ENCODE measurements at regions of chr2 and their contacts with region 1.

Region 1: DNA sequence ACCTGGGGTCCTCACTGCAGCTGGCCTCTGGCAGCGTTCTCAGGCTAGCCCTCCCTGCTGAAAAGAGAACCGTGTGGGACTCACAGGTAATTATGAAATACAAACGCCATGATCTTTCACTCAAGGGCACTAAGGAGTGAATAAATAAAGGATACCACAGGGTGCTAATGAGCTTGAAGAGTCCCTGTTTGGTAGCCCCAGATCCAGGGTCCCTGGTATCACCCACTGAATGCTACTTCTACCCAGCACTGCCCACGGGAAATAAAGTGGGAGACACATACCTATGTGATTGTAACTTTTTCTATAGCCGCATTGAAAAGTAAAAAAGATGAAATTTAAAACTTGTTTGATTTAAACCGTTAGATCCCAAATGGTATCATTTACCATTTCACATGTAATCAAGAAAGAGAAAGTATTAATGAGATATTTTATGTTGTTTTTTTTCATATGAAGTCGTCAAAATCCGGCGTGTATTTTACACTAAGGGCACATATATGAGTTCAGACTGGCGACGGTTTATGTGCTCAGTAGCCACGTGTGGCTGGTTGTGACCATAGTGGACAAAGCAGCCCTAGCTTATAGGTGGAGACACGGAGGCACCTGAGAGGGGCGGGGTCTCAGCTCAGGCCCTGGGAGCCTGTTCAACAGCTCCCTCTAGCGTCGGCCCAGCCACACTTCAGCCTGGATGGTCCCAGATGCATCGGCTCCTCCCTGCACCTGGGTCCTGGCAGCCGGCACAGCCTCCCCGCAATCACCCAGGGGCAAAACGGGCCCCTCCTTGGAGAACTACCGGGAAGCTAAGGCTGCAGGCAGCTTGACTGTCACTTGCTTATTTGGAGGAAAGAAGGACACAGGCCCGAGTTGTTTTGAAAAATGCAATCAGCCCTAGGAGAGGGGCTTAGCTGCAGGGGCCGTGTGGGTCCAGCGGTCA is 39.2 kb downstream of the ODC1 start:
- DNase-seq: peak; percentile 90
- ATAC-seq: peak; percentile 94
- H3K4me3 Mint-ChIP-seq: no peak overlapping the region
- H3K27ac Mint-ChIP-seq: no peak overlapping the region
- H3K4me1 Mint-ChIP-seq: peaks cover 9% of the 10 kb centered on the region
- H3K27me3 Mint-ChIP-seq: no peaks in the 10 kb centered on the region
- CTCF ChIP-seq: peak; percentile 93

Region 2: DNA sequence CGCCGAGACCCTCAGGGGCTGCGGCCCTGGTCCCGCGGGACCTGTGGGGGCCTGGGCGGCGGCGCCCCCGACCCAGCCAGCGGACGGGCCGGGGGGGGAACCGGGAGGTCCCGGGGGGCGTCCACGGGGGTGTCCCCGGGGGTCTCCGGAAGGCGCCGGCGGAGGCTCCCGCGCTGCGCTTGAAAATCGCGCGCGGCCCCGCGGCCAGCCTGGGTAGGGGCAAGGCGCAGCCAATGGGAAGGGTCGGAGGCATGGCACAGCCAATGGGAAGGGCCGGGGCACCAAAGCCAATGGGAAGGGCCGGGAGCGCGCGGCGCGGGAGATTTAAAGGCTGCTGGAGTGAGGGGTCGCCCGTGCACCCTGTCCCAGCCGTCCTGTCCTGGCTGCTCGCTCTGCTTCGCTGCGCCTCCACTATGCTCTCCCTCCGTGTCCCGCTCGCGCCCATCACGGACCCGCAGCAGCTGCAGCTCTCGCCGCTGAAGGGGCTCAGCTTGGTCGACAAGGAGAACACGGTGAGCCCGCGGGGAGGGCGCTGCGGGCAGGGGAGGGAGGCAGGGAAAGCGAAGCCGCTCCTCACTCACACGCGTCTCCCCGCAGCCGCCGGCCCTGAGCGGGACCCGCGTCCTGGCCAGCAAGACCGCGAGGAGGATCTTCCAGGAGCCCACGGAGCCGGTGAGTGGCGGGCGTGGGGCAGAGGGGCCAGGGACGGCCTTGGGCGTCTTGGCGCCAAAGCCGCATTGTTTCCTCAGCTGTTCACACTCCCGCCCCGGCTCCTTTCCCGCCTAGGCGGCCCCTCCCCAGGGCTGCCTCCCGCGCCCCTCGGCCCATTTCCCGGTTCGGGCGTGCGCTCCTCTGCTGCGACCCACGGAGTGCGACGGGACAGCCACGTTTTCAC is 286.3 kb before region 1 on chr2 and contains the start of gene RRM2:
- CTCF ChIA-PET with region 1: interaction called, 30 read pairs
- POLR2A ChIA-PET with region 1: no interaction called
- DNase-seq: peak; percentile 96
- ATAC-seq: peak; percentile 90
- H3K4me3 Mint-ChIP-seq: peak within 1 kb of the TSS; percentile 91
- H3K27ac Mint-ChIP-seq: peak within 1 kb of the TSS; percentile 97
- H3K4me1 Mint-ChIP-seq: peaks cover 36% of the 10 kb centered on the region
- H3K27me3 Mint-ChIP-seq: no peaks in the 10 kb centered on the region; the same call in 1 of the 2 replicates
- CTCF ChIP-seq: no peak
- total RNA-seq, gene RRM2: 119 to 129 TPM (median 126 TPM) in 3 replicates

Region 3: DNA sequence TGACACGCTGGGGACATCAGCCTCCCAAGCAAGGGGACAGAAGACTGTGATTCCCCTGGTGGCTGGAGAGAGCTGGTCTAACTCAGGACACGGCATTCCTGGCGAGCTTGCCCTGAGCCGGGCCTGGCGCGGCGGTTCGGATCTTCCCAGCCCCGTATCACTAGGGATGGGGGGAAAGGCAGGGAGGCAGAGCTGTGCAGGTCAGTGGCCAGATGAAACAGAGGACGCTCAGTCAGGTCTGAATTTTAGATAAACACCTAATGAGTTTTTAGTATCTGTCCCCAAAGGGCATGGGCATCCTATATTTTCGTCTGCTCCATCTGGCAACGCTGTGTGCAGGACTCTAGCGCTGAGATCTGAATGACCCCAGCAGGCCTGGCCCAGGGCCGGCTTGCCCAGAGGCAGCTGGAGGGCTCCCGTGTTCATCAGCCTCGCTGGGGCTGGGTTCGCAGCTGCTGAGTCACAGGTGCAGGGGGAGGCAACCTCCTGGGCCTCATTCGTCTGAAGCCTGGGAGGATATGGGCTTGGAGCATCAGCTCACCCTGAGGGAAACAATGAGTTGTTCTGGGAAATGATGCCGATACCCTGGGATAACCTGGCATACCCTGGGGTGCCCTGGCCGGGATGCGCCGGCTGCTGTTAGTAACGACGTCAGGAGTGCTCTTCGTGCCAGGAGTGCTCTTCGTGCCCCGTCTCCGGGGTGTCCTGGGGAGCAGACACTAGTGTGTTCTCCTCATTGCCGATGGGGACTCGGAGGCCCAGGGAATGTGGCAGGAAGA is 154.4 kb before region 1 on chr2:
- CTCF ChIA-PET with region 1: interaction called, 19 read pairs
- POLR2A ChIA-PET with region 1: no interaction called
- DNase-seq: peak; percentile 11
- ATAC-seq: 0 out of 2 replicates have a peak, but pooled peaks have one; percentile 21
- H3K4me3 Mint-ChIP-seq: no peak overlapping the region
- H3K27ac Mint-ChIP-seq: no peak overlapping the region
- H3K4me1 Mint-ChIP-seq: no peaks in the 10 kb centered on the region
- H3K27me3 Mint-ChIP-seq: no peaks in the 10 kb centered on the region
- CTCF ChIP-seq: no peak

Region 4: DNA sequence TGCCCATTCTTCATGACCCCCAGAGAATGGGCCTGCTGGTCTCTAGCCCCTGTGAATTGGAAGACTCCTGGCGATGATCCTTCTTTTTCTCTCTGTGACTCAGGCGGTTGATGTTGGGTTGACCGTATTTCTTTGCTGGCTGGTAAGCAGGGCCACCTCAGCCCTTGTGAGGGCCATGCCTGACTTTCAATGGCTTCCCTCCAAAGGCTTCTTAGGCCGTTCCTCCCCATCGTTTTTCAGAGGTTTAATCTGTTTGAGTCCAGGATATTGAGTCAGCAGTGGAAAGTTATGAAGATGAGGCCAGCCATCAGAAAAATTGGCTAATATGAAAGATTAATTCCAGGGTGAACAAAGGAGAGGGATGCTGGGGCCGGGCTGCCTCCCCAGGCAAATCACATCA is 92.6 kb before region 1 on chr2:
- CTCF ChIA-PET with region 1: interaction called, 42 read pairs
- POLR2A ChIA-PET with region 1: no interaction called
- DNase-seq: no peak
- ATAC-seq: no peak
- H3K4me3 Mint-ChIP-seq: no peak overlapping the region
- H3K27ac Mint-ChIP-seq: peak overlapping the region; percentile 89
- H3K4me1 Mint-ChIP-seq: peaks cover 15% of the 10 kb centered on the region
- H3K27me3 Mint-ChIP-seq: no peaks in the 10 kb centered on the region
- CTCF ChIP-seq: no peak

Region 5: GRCh38 chr2:10382354-10383061 is 26.4 kb before region 1 on chr2:
- CTCF ChIA-PET with region 1: interaction called, 29 read pairs
- POLR2A ChIA-PET with region 1: no interaction called
- DNase-seq: no peak
- ATAC-seq: peak; percentile 70
- H3K4me3 Mint-ChIP-seq: no peak overlapping the region
- H3K27ac Mint-ChIP-seq: no peak overlapping the region
- H3K4me1 Mint-ChIP-seq: peaks cover 60% of the 10 kb centered on the region
- H3K27me3 Mint-ChIP-seq: no peaks in the 10 kb centered on the region
- CTCF ChIP-seq: no peak

Region 6: DNA sequence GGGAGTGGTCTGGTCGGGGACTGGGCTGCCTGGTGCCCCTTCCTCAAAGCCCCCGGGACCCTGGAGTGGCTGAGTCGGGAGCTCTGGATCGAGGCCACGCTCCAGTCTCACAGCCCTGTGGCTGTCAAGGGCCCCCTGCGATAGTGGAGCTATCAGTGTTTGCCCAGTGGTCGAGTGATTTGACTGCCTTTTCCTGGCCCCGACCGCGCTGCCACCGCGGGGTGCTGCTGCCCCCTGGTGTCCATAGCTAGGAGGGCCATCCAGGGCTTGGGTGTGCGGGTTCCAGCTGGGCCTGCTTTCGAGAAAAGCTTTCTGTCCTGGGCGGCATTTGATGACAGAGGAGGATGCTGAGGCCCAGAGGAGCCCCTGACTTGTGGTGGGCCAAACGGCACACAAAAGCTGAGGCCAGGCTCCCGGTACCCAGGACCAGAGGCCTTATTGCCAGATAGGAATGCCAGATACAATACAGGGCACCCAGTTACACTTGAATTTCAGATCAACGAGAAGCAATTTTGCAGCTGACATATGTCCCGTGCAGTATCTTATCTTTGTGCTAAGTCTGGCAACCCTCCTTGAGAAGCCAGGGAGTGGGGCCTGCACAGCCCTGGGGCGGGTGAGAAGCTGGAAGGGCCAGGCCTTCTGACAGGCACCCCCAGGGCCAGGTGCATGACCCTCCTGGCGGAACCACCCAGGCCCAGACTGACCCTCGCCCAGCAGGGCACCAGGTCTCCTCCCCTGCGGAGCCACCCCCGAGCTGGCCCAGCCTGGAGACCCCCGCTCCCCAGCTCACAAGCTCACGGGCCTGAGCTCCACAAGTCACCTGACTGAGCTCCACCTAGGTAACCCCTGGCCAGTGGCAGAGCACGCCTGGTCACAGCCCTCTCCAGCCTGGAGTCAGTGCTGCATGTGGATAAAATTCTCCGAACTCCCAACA is 26.2 kb after region 1 on chr2:
- CTCF ChIA-PET with region 1: interaction called, 104 read pairs
- POLR2A ChIA-PET with region 1: no interaction called
- DNase-seq: peak; percentile 84
- ATAC-seq: peak; percentile 81
- H3K4me3 Mint-ChIP-seq: no peak overlapping the region
- H3K27ac Mint-ChIP-seq: no peak overlapping the region
- H3K4me1 Mint-ChIP-seq: no peaks in the 10 kb centered on the region
- H3K27me3 Mint-ChIP-seq: no peaks in the 10 kb centered on the region; the same call in 1 of the 2 replicates
- CTCF ChIP-seq: peak; percentile 87